Testis (tissue), 5 donors: ENCODE measurements at regions of chr7 and their contacts with region 1.

Region 1: DNA sequence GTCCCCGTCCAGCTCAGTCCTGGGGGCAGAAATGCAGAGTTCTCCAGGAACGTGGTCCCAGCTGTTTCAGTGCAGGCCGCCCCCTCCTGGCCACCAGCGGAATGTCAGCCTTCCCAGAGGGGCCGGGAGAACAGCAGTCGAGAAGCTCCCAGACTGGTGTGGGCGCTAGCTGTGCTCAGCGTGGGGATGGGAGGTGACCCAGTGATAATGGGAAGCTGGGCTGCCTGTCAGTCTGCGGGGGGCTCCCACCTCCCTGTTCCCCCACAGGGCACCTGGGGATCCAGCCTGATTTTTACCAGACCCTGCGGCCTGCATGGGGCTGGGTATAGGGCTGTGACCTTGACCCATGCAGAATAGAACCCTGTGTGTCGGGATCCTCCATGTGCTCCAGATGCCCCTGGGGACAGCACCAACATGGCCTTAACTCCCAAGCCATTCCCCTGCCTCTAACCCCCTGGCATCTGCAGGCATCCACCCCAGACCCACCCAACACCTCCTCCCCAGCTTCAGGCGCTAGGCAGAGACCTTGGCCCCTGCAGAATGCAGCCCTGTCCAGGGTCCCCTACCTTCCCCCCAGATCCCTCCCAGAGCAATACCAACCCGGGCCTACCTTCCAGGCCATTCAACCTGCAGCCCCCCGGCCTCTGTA is 946 bp upstream of the ELN start:
- DNase-seq: peak; percentile 89
- H3K4me3 ChIP-seq: peak overlapping the region in 1 of 2 donors; percentile 69
- H3K27ac ChIP-seq: peak overlapping the region; percentile 74 to 80
- H3K4me1 ChIP-seq: peaks cover 44% of the 10 kb centered on the region
- H3K27me3 ChIP-seq: no peaks in the 10 kb centered on the region
- CTCF ChIP-seq: peak; percentile 90 to 97 (median 96)
- POLR2A ChIP-seq: no peak

Region 2: DNA sequence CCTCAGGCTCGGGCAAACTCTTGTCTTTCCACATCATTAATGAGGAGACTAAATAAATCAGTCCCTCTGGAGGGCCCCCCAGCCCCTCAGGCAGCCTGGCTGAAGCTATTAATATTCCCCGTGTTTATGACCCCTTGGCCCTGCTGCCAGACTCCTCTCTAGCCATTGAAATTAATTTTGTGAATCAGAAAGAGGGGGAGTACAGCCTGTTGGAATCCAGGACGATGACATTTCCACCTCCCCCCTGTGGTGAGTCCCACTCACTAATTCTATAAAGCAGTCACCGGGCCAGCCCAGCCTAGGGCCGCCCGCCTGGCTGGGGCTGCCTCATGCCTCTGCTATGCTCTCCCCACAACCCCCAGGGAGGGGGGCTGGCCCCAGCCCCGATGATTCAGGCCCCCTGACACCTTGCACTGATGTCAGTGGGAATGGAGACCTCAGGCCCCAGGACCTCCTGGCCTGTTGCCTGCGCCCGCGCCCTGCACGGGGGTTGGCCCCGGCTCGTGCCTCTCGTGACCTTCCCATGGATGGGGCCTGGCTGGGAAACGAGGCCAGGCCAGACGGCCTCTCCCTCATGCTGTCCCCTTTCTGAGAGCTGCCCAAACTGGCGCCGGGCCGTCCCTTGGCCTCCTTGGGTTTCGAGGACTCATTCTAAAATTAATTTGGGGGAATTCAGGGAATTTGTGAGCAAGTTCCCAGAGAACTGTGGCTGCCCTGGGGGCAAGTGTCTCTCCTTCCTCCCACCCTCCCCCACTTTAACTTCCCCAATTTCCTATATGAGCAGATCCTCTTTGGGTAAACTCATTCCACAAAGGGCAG is 132.1 kb before region 1 on chr7:
- intact Hi-C with region 1: loop called (anchors 5 kb)
- DNase-seq: no peak
- H3K4me3 ChIP-seq: no peak overlapping the region
- H3K27ac ChIP-seq: no peak overlapping the region
- H3K4me1 ChIP-seq: peaks cover 13% of the 10 kb centered on the region
- H3K27me3 ChIP-seq: no peaks in the 10 kb centered on the region
- CTCF ChIP-seq: no peak
- POLR2A ChIP-seq: no peak